Left ventricle myocardium inferior (tissue), 1 donor: ENCODE measurements at regions of chr3 and their contacts with region 1.

Region 1: GRCh38 chr3:70631716-70632307 is 319.4 kb upstream of the MDFIC2 start:
- DNase-seq: no peak
- H3K4me3 ChIP-seq: no peak overlapping the region
- H3K27ac ChIP-seq: no peak overlapping the region
- H3K4me1 ChIP-seq: no peaks in the 10 kb centered on the region
- H3K27me3 ChIP-seq: no peaks in the 10 kb centered on the region
- CTCF ChIP-seq: no peak

Region 2: GRCh38 chr3:69893274-69893673 is 738.5 kb before region 1 on chr3:
- intact Hi-C with region 1: no loop called
- DNase-seq: no peak
- H3K4me3 ChIP-seq: no peak overlapping the region
- H3K27ac ChIP-seq: no peak overlapping the region
- H3K4me1 ChIP-seq: peaks cover 52% of the 10 kb centered on the region
- H3K27me3 ChIP-seq: no peaks in the 10 kb centered on the region
- CTCF ChIP-seq: no peak

Region 3: GRCh38 chr3:70543493-70543892 is 88.3 kb before region 1 on chr3:
- intact Hi-C with region 1: no loop called
- DNase-seq: no peak
- H3K4me3 ChIP-seq: no peak overlapping the region
- H3K27ac ChIP-seq: no peak overlapping the region
- H3K4me1 ChIP-seq: no peaks in the 10 kb centered on the region
- H3K27me3 ChIP-seq: peaks cover 14% of the 10 kb centered on the region
- CTCF ChIP-seq: no peak

Region 4: GRCh38 chr3:70603103-70603502 is 28.7 kb before region 1 on chr3:
- intact Hi-C with region 1: loop called (anchors 2 kb)
- DNase-seq: no peak
- H3K4me3 ChIP-seq: no peak overlapping the region
- H3K27ac ChIP-seq: no peak overlapping the region
- H3K4me1 ChIP-seq: no peaks in the 10 kb centered on the region
- H3K27me3 ChIP-seq: no peaks in the 10 kb centered on the region
- CTCF ChIP-seq: no peak